ENCODE measurements at regions of chr14 and their contacts with region 1.

Region 1: DNA sequence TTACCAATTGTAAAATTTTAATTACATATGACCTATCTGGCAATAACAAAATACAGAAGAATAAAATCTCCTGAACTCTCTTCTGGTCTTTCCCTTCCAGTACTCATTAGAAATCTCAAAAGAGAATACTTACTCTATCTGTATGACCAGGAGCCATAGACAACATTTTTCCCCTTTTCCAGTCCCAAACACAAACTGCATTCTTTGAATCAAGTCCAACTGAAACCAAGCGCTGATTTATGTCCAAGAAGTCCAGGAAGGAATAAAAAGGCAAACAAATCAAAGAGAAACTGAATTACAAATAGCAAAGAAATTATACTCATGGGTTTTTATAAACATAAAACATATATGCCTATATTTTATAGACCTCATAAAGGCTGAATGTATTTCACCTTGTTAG is 46.7 kb downstream of the EML5 start:
- DNase-seq: peak; percentile 16
- H3K4me3 ChIP-seq: no peak overlapping the region
- CTCF ChIP-seq: no peak

Region 2: GRCh38 chr14:88667555-88668273 is 78.3 kb before region 1 on chr14:
- in situ Hi-C with region 1: loop called (anchors 5 kb)
- DNase-seq: peak; percentile 74
- H3K4me3 ChIP-seq: no peak overlapping the region
- CTCF ChIP-seq: peak; percentile 94

Region 3: DNA sequence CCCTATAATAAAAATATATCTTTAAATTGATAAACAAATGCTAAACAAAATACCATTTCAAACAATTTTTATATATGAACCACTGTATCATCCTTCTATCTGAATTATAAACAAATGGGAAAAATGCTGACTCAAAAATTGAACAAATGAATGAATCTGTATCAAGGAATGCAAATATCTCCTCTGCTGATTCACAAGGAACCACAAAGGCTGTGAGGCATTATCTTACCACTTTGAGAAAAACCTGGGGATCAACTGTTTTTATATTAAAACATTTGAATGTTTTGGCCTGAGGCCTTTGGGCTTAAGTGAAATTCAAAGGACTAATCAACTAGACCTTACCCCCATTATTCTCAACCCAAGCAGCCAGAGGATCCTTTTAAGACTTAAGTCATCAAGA is 39.6 kb before region 1 on chr14:
- in situ Hi-C with region 1: no loop called
- DNase-seq: no peak
- H3K4me3 ChIP-seq: no peak overlapping the region
- CTCF ChIP-seq: no peak

Region 4: DNA sequence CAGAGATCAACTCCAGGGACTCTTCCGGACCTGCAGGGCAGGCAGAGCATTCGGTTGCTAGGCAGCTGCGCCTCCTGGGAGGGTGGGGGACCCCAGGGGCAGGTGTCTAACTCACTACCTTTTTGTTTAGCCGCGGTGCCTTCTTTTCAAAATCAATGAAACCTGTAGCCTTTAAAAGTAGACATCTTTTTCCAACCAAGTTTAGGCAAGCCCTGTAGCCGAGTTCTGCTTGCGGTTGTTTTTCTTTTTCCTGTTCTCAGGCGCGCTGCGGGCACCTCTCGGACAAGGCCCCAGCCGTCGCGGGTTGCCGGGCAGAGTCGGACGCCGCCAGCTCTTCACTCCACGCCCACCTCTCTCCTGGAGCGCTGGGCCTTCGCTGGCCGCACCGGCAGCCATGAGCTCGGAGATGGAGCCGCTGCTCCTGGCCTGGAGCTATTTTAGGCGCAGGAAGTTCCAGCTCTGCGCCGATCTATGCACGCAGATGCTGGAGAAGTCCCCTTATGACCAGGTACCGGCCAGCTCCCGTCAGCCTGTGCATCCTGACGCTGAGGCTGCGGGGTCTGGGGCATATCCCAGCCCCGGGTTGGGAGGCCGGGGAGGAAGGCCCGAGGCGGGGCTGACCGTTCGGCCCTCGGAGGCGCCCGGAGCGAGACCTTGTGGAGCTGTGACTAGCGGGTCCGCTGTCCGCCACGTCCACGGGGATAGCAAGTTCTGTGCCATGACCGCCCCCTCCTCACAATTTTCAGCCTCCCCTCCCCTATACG is 78.4 kb after region 1 on chr14 and contains the start of gene TTC8:
- in situ Hi-C with region 1: no loop called
- DNase-seq: peak; percentile 74
- H3K4me3 ChIP-seq: peak within 1 kb of the TSS; percentile 80
- CTCF ChIP-seq: no peak

Measured in astrocyte of the cerebellum (primary cell).